T-cell (primary cell): ENCODE measurements at regions of chr7 and their contacts with region 1.

Region 1: GRCh38 chr7:101244375-101245146 is at the start of gene FIS1:
- DNase-seq: peak; percentile 81 to 96 (median 89)
- ATAC-seq: peak; percentile 95 to 98 (median 96)
- H3K4me3 ChIP-seq: peak within 1 kb of the TSS; percentile 81 to 97
- H3K4me3 Mint-ChIP-seq: peak within 1 kb of the TSS; percentile 91 to 98 (median 92)
- H3K27ac ChIP-seq: peak within 1 kb of the TSS; percentile 88
- H3K27ac Mint-ChIP-seq: peak within 1 kb of the TSS; percentile 98 to 99
- H3K4me1 ChIP-seq: peaks cover 6 to 33% of the 10 kb centered on the region in 2 experiments
- H3K4me1 Mint-ChIP-seq: peaks cover 35 to 41% (median 36%) of the 10 kb centered on the region in 3 donors
- H3K27me3 ChIP-seq: no peaks in the 10 kb centered on the region
- H3K27me3 Mint-ChIP-seq: no peaks in the 10 kb centered on the region
- total RNA-seq, gene FIS1: 99.3 to 136 (median 125) TPM

Region 2: GRCh38 chr7:101129603-101130117 is 114.9 kb before region 1 on chr7:
- CTCF ChIA-PET with region 1: interaction called in 1 of 2 experiments, 3 read pairs
- POLR2A ChIA-PET with region 1: interaction called in 1 of 2 experiments, 13 read pairs
- DNase-seq: no peak
- ATAC-seq: no peak
- H3K4me3 ChIP-seq: no peak overlapping the region
- H3K4me3 Mint-ChIP-seq: no peak overlapping the region
- H3K27ac ChIP-seq: no peak overlapping the region
- H3K27ac Mint-ChIP-seq: no peak overlapping the region
- H3K4me1 ChIP-seq: peaks cover under 1 to 25% of the 10 kb centered on the region in 2 experiments
- H3K4me1 Mint-ChIP-seq: peaks cover 23 to 32% (median 25%) of the 10 kb centered on the region in 3 donors
- H3K27me3 ChIP-seq: peaks cover 0 to 64% of the 10 kb centered on the region in 2 experiments
- H3K27me3 Mint-ChIP-seq: peaks cover 38 to 70% of the 10 kb centered on the region in 2 donors

Region 3: GRCh38 chr7:101217388-101218235 is 26.9 kb before region 1 on chr7 and contains the starts of genes PLOD3 and ZNHIT1:
- CTCF ChIA-PET with region 1: interaction called, 8 to 39 read pairs
- POLR2A ChIA-PET with region 1: interaction called in 1 of 2 experiments, 11 read pairs
- DNase-seq: peak; percentile 88 to 99 (median 94)
- ATAC-seq: peak; percentile 70 to 84 (median 74)
- H3K4me3 ChIP-seq: peak within 1 kb of the TSS; percentile 88 to 95
- H3K4me3 Mint-ChIP-seq: peak within 1 kb of the TSS; percentile 90 to 96 (median 95)
- H3K27ac ChIP-seq: peak within 1 kb of the TSS; percentile 77
- H3K27ac Mint-ChIP-seq: peak within 1 kb of the TSS; percentile 81 to 86
- H3K4me1 ChIP-seq: peaks cover 7 to 56% of the 10 kb centered on the region in 2 experiments
- H3K4me1 Mint-ChIP-seq: peaks cover 45 to 57% (median 51%) of the 10 kb centered on the region in 3 donors
- H3K27me3 ChIP-seq: no peaks in the 10 kb centered on the region
- H3K27me3 Mint-ChIP-seq: no peaks in the 10 kb centered on the region
- total RNA-seq, gene PLOD3: 27.7 to 74.2 (median 58.8) TPM
- total RNA-seq, gene ZNHIT1: 32.9 to 54.1 (median 50.4) TPM

Region 4: DNA sequence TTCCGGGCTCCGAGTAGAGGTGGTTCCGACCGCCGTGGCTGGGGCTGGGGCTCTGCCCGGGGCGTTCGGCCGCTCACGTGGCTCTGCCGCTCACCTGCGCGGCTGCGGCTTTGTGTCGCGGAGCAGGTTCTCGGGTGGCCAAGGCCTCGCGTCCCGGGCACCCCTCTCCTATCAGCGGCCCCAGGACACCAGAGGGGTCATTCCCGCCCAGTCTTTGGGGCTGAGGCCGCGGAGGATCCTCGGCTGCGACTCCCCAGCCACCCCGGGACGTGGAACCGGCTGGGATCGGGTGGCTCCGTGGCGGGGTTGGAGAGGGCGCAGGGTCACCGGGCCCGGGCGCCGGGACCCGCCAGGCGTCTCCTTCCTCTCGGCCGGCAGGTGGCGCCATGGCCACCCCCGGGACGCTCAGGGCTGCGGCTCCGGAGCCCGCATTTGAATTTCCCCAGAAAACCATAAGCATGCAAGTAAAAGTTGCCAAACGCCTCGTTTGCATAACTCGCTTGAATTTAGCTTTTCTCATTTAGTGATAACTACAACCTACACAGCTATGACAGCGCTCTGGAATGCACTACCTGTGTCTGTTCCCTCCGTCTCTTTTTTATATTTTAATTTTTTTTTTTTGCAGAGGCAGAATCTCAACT is 119.3 kb after region 1 on chr7:
- CTCF ChIA-PET with region 1: no interaction called
- POLR2A ChIA-PET with region 1: no interaction called
- DNase-seq: peak; percentile 29 to 82 (median 59)
- ATAC-seq: peak; percentile 88 to 96 (median 94)
- H3K4me3 ChIP-seq: peak overlapping the region; percentile 42 to 71
- H3K4me3 Mint-ChIP-seq: peak overlapping the region in 2 of 3 donors; percentile 46 to 60
- H3K27ac ChIP-seq: no peak overlapping the region
- H3K27ac Mint-ChIP-seq: no peak overlapping the region
- H3K4me1 ChIP-seq: peaks cover 3 to 16% of the 10 kb centered on the region in 2 experiments
- H3K4me1 Mint-ChIP-seq: peaks cover 4 to 10% (median 6%) of the 10 kb centered on the region in 3 donors
- H3K27me3 ChIP-seq: peaks cover 3 to 48% of the 10 kb centered on the region in 2 experiments
- H3K27me3 Mint-ChIP-seq: peaks cover 18 to 25% of the 10 kb centered on the region in 2 donors